ENCODE measurements at regions of chr2 and their contacts with region 1.

Region 1: GRCh38 chr2:32010670-32011484 is at the start of gene MEMO1:
- DNase-seq: peak; percentile 96
- H3K4me3 Mint-ChIP-seq: peak within 1 kb of the TSS; percentile 85
- H3K27ac Mint-ChIP-seq: peak within 1 kb of the TSS; percentile 92
- H3K4me1 Mint-ChIP-seq: peaks cover 41% of the 10 kb centered on the region
- H3K27me3 Mint-ChIP-seq: no peaks in the 10 kb centered on the region
- total RNA-seq, gene MEMO1: 39.5 to 42.0 TPM

Region 2: DNA sequence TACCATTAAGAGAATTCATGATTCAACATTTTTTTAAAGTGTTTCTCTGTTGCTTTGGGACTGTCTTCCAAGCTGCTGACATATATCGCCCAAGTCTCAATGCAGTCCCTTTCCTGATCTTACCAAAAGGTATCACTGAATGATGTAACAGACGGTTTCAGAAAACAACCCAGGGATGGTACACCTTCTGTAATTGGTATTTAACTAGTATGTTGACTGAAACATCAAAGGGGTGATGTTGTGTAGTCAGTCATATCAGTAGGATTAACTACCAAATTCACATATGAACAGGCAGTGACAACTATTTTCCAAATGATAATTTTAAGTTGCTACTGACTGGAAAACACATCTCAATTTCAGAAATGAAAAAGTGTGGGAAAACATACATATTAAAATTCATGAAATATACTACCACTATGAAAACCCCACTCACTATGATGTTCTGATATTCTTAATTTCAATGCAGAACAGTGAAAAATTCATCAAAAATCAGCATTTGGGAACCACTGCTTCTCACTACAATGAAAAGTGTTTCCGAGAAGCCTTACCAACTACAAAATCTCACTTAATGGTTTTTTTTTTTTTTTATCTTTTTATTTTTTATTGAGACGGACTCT is 59.8 kb before region 1 on chr2:
- CTCF ChIA-PET with region 1: interaction called, 3 read pairs
- intact Hi-C with region 1: loop called (anchors 2 kb)
- DNase-seq: peak; percentile 24
- H3K4me3 Mint-ChIP-seq: no peak overlapping the region
- H3K27ac Mint-ChIP-seq: peak overlapping the region; percentile 41
- H3K4me1 Mint-ChIP-seq: peaks cover 40% of the 10 kb centered on the region
- H3K27me3 Mint-ChIP-seq: no peaks in the 10 kb centered on the region

Region 3: GRCh38 chr2:31997653-31998052 is 13.2 kb before region 1 on chr2:
- CTCF ChIA-PET with region 1: no interaction called
- intact Hi-C with region 1: loop called (anchors 1 kb)
- DNase-seq: no peak
- H3K4me3 Mint-ChIP-seq: no peak overlapping the region
- H3K27ac Mint-ChIP-seq: peak overlapping the region; percentile 28
- H3K4me1 Mint-ChIP-seq: peaks cover 52% of the 10 kb centered on the region
- H3K27me3 Mint-ChIP-seq: no peaks in the 10 kb centered on the region

Region 4: DNA sequence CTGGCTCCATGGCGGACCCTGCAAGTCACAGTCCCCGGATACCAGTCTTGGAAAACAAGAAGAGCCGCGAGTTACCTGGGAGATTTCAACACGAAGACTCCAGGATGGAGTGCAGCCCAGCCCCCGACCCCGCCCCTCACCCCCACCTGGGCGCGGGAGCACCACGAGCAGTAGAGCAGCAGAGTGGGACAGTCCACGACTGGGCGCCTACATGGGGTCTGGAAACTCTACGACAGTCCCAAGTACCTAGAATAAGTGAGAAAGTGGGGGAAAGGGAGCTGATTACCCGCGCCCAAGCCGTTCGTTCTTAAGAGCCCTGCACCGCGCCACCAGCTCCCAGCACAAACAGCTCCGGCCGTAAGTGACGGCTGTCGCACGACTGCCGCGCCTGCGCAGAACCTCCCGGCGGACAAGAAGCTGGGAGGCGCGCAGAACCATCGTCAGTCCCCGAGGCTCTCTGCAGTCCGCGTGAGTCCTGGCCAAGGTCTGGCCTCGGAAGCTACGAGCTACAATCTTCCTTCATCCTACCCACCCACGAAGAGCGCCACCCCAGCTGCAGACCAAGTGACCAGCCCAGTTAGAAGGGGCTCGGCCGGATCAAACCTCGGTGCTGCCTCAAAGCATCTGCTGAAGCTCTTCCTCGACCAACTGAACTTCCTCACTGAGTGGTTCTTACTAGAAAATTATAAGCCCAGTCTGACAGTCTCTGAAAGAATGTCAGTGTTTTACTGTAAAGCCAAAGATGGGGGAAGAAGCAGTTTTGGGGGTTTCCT is 28.8 kb after region 1 on chr2 and contains the start of gene DPY30:
- CTCF ChIA-PET with region 1: no interaction called
- intact Hi-C with region 1: loop called (anchors 1 kb)
- DNase-seq: peak; percentile 93
- H3K4me3 Mint-ChIP-seq: peak within 1 kb of the TSS; percentile 84
- H3K27ac Mint-ChIP-seq: peak within 1 kb of the TSS; percentile 93
- H3K4me1 Mint-ChIP-seq: peaks cover 16% of the 10 kb centered on the region
- H3K27me3 Mint-ChIP-seq: no peaks in the 10 kb centered on the region
- total RNA-seq, gene DPY30: 80.1 to 88.5 TPM

Region 5: GRCh38 chr2:32277674-32278482 is 267.0 kb after region 1 on chr2 and contains the start of gene YIPF4:
- CTCF ChIA-PET with region 1: no interaction called
- intact Hi-C with region 1: loop called (anchors 2 kb)
- DNase-seq: peak; percentile 91
- H3K4me3 Mint-ChIP-seq: peak within 1 kb of the TSS; percentile 84
- H3K27ac Mint-ChIP-seq: peak within 1 kb of the TSS; percentile 93
- H3K4me1 Mint-ChIP-seq: peaks cover 22% of the 10 kb centered on the region
- H3K27me3 Mint-ChIP-seq: no peaks in the 10 kb centered on the region
- total RNA-seq, gene YIPF4: 36.5 to 39.7 TPM

Region 6: DNA sequence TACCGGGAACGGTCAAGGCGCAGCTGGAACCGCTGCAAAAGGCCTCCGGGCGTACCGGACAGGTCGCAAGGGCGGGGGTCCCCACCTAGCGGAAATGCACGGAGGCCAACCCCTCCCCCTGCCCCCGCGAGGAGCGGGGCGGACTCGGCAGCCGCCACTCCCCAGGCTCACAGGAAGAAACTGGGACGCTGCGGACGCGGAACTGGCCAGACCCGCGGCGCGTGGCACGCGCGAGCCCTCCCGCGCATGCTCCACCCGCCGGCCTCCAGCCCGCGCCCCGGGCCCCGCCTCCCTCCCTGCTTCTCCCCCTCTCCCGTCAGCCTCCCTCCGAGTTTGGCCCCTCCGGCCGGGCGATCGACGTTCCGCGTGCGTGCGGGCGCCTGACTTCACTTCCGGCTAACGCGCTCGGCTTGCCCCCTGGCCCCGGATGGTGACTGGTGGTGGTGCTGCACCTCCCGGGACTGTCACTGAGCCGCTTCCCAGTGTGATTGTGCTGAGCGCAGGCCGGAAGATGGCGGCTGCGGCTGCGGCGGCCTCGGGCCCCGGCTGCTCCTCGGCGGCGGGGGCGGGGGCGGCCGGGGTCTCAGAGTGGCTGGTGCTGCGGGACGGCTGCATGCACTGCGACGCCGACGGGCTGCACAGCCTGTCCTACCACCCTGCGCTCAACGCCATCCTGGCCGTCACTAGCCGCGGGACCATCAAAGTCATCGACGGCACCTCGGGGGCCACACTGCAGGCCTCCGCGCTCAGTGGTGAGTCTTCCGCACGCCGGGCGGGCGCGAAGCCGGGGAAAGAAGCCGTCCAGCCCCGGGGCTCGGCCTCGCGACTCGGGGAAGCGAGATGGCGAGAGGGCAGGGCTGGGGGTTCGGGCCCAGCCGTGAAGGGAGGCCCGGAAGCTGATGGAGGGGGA is 346.1 kb after region 1 on chr2 and contains the start of gene BIRC6:
- CTCF ChIA-PET with region 1: no interaction called
- intact Hi-C with region 1: loop called (anchors 2 kb)
- DNase-seq: peak; percentile 97
- H3K4me3 Mint-ChIP-seq: peak within 1 kb of the TSS; percentile 78
- H3K27ac Mint-ChIP-seq: peak within 1 kb of the TSS; percentile 85
- H3K4me1 Mint-ChIP-seq: peaks cover 31% of the 10 kb centered on the region
- H3K27me3 Mint-ChIP-seq: no peaks in the 10 kb centered on the region
- total RNA-seq, gene BIRC6: 51.4 to 52.9 TPM

Measured in activated naive CD4-positive, alpha-beta T cell treated with anti-CD3 and anti-CD28 coated beads for 36 hours (primary cell).